Stomach (tissue), 19 donors: ENCODE measurements at regions of chr1 and their contacts with region 1.

Region 1: GRCh38 chr1:163561580-163562295 is 240.0 kb downstream of the NUF2 start:
- DNase-seq: peak in 1 of 2 donors; percentile 58
- H3K4me3 ChIP-seq: no peak overlapping the region
- H3K27ac ChIP-seq: no peak overlapping the region
- H3K4me1 ChIP-seq: no peaks in the 10 kb centered on the region
- H3K27me3 ChIP-seq: no peaks in the 10 kb centered on the region
- CTCF ChIP-seq: peak in 4 of 7 experiments; percentile 8 to 50 (median 40)
- EP300 ChIP-seq: no peak
- POLR2A ChIP-seq: no peak

Region 2: GRCh38 chr1:163395790-163396189 is 165.9 kb before region 1 on chr1:
- intact Hi-C with region 1: no loop called
- DNase-seq: peak in 1 of 2 donors; percentile 57
- H3K4me3 ChIP-seq: no peak overlapping the region
- H3K27ac ChIP-seq: no peak overlapping the region
- H3K4me1 ChIP-seq: no peaks in the 10 kb centered on the region
- H3K27me3 ChIP-seq: peaks cover 0 to 7% (median 0%) of the 10 kb centered on the region in 3 donors
- CTCF ChIP-seq: no peak
- EP300 ChIP-seq: no peak
- POLR2A ChIP-seq: no peak

Region 3: GRCh38 chr1:163701783-163702374 is 140.1 kb after region 1 on chr1:
- intact Hi-C with region 1: loop called (anchors 10 kb)
- DNase-seq: peak in 1 of 2 donors; percentile 53
- H3K4me3 ChIP-seq: no peak overlapping the region
- H3K27ac ChIP-seq: no peak overlapping the region
- H3K4me1 ChIP-seq: no peaks in the 10 kb centered on the region
- H3K27me3 ChIP-seq: no peaks in the 10 kb centered on the region
- CTCF ChIP-seq: peak in 3 of 7 experiments; percentile 19 to 49 (median 32)
- EP300 ChIP-seq: no peak
- POLR2A ChIP-seq: no peak